ENCODE measurements at regions of chr14 and their contacts with region 1.

Region 1: DNA sequence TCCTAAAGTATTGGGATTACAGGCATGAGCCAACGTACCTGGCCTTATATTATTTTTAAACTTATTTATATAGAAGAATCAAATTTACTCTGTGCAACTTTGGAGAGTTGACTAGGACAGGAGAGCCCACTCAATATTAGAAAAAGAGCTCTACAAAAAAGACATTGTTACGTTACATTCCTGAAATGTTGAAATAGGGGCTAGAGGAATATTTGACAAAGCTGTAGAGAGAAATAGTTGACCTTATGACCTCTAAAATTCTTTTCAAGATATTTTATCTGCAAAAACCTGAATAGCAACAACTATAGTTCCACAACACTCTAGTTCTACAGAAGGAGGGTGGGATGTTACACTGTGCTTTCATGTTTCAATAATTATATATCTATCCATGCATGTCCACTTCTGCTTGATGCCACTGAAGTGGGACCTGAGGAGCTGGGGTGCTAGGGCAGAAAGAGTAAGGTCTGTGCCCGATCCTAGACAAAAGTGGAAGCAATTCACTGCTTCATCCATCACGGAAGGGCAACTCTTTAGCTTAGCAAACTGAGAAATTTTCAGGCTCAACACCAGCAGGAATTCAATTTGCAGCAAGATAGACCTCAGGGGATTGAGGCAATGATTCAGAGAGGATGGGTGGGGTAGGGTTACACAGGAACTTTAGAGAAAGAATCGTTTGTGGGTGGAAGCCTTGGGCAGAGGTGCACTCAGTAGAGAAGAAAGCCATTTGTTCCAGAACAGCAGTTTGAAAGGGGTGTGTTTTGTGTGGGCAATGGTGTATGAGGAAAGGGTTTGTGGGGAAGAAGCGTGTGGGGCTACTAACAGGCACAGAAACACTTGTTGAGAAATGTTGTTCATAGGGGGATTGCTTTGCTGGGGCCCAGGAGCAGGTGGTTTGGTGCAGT is 16.0 kb upstream of the RNASE10 start:
- DNase-seq: peak in 4 of 5 donors; percentile 15 to 38 (median 21)
- H3K4me3 ChIP-seq: peak overlapping the region in 1 of 2 donors; percentile 1
- H3K4me3 Mint-ChIP-seq: peak overlapping the region; percentile 60 to 87 (median 84)
- H3K27ac ChIP-seq: no peak overlapping the region
- H3K27ac Mint-ChIP-seq: peak overlapping the region; percentile 33 to 95 (median 86)
- H3K4me1 ChIP-seq: peaks cover 75% of the 10 kb centered on the region
- H3K4me1 Mint-ChIP-seq: peaks cover 59 to 88% (median 70%) of the 10 kb centered on the region in 4 donors
- H3K27me3 ChIP-seq: no peaks in the 10 kb centered on the region
- H3K27me3 Mint-ChIP-seq: no peaks in the 10 kb centered on the region

Region 2: DNA sequence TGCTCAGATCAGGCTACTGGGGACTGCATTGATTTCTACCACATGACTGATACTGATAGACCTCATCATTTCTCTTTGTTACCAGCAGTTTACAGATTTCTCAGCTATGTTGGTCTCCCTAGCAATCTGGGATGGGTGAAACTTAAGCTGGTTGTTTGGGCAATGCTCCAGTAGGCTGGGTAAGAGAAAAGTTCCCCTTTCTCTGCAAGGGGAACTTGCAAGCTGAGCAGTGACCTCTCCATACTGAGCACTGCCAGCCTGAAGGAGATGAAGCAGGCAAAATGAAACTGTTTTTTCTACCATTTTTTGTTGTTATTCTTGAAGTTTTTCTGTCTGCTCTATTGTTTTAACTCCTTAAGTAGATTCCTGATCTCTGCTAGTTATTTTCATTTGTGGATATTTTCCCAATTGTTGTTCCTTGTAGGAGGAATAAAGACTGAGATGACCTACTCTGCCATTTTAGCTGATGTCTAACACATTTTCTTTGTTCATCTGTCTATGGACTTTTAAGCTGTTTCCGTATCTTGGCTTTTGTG is 717.4 kb before region 1 on chr14:
- CTCF ChIA-PET with region 1: no interaction called
- POLR2A ChIA-PET with region 1: no interaction called
- intact Hi-C with region 1: no loop called
- DNase-seq: no peak
- H3K4me3 ChIP-seq: no peak overlapping the region
- H3K4me3 Mint-ChIP-seq: no peak overlapping the region
- H3K27ac ChIP-seq: no peak overlapping the region
- H3K27ac Mint-ChIP-seq: no peak overlapping the region
- H3K4me1 ChIP-seq: no peaks in the 10 kb centered on the region
- H3K4me1 Mint-ChIP-seq: no peaks in the 10 kb centered on the region
- H3K27me3 ChIP-seq: no peaks in the 10 kb centered on the region
- H3K27me3 Mint-ChIP-seq: no peaks in the 10 kb centered on the region

Region 3: GRCh38 chr14:20454516-20455354 is 34.6 kb before region 1 on chr14 and contains the starts of genes APEX1 and OSGEP:
- CTCF ChIA-PET with region 1: interaction called, 3 read pairs
- POLR2A ChIA-PET with region 1: interaction called, 19 read pairs
- intact Hi-C with region 1: no loop called
- DNase-seq: peak; percentile 96 to 99 (median 98)
- H3K4me3 ChIP-seq: peak within 1 kb of the TSS; percentile 70 to 99
- H3K4me3 Mint-ChIP-seq: peak within 1 kb of the TSS in 2 of 8 donors; percentile 13 to 23
- H3K27ac ChIP-seq: peak within 1 kb of the TSS; percentile 89
- H3K27ac Mint-ChIP-seq: peak within 1 kb of the TSS in 2 of 7 donors; percentile 19 to 55
- H3K4me1 ChIP-seq: peaks cover 53% of the 10 kb centered on the region
- H3K4me1 Mint-ChIP-seq: peaks cover 5 to 21% (median 12%) of the 10 kb centered on the region in 4 donors
- H3K27me3 ChIP-seq: no peaks in the 10 kb centered on the region
- H3K27me3 Mint-ChIP-seq: no peaks in the 10 kb centered on the region
- total RNA-seq, gene APEX1: 102 to 105 TPM
- total RNA-seq, gene OSGEP: 72.3 to 75.9 TPM

Region 4: GRCh38 chr14:20461274-20462001 is 27.9 kb before region 1 on chr14 and contains the start of gene PIP4P1:
- CTCF ChIA-PET with region 1: interaction called, 3 read pairs
- POLR2A ChIA-PET with region 1: interaction called, 19 read pairs
- intact Hi-C with region 1: no loop called
- DNase-seq: peak; percentile 98 to 100 (median 99)
- H3K4me3 ChIP-seq: peak within 1 kb of the TSS; percentile 64 to 76
- H3K4me3 Mint-ChIP-seq: peak within 1 kb of the TSS; percentile 89 to 96 (median 92)
- H3K27ac ChIP-seq: peak within 1 kb of the TSS; percentile 86
- H3K27ac Mint-ChIP-seq: peak within 1 kb of the TSS; percentile 92 to 99 (median 97)
- H3K4me1 ChIP-seq: peaks cover 39% of the 10 kb centered on the region
- H3K4me1 Mint-ChIP-seq: peaks cover 19 to 35% (median 23%) of the 10 kb centered on the region in 4 donors
- H3K27me3 ChIP-seq: no peaks in the 10 kb centered on the region
- H3K27me3 Mint-ChIP-seq: no peaks in the 10 kb centered on the region
- total RNA-seq, gene PIP4P1: 77.8 to 78.1 TPM

Region 5: GRCh38 chr14:20469242-20469889 is 20.0 kb before region 1 on chr14 and contains the start of gene PNP:
- CTCF ChIA-PET with region 1: interaction called, 14 read pairs
- POLR2A ChIA-PET with region 1: interaction called, 74 read pairs
- intact Hi-C with region 1: loop called (anchors 2 kb)
- DNase-seq: peak; percentile 84 to 92 (median 88)
- H3K4me3 ChIP-seq: peak within 1 kb of the TSS; percentile 84 to 92
- H3K4me3 Mint-ChIP-seq: peak within 1 kb of the TSS; percentile 97 to 100 (median 99)
- H3K27ac ChIP-seq: peak within 1 kb of the TSS; percentile 77
- H3K27ac Mint-ChIP-seq: peak within 1 kb of the TSS; percentile 94 to 99 (median 98)
- H3K4me1 ChIP-seq: peaks cover 47% of the 10 kb centered on the region
- H3K4me1 Mint-ChIP-seq: peaks cover 33 to 55% (median 43%) of the 10 kb centered on the region in 4 donors
- H3K27me3 ChIP-seq: no peaks in the 10 kb centered on the region
- H3K27me3 Mint-ChIP-seq: no peaks in the 10 kb centered on the region
- total RNA-seq, gene PNP: 106 to 108 TPM

Region 6: DNA sequence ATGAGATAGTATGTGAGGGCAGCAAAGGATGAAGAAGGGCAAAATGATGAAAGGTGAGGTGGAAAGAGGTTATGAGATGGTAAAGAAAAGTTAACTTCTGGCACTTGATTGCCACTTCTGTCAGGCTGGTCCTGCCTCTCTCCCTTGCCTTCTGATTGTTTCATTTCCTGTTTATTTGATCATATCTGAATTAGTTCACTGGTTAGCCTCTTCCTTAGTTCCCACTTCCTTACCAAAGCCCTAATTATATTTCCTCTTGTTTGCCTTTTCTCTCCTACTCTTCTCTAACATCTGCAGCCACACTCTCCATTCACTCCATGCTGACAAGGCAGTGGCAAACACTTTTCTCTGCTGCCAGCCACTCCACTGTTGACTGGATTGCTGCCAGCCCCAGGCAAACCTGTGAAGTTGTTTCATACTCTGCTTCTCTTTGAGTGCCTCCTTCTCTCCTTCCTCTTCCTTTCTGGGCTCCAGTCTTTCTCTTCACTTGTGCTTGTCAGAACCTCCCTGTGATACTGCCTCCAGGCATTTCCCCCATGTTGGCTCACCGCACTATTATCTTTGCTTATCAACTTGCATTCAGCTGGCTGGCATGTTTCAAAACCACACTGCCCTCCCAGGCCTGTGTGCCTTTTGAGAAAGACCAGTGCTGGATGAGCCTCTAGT is 12.0 kb before region 1 on chr14:
- CTCF ChIA-PET with region 1: interaction called, 7 read pairs
- POLR2A ChIA-PET with region 1: interaction called, 22 read pairs
- intact Hi-C with region 1: loop called (anchors 1 kb)
- DNase-seq: peak; percentile 55 to 67 (median 62)
- H3K4me3 ChIP-seq: peak overlapping the region in 1 of 2 donors; percentile 42
- H3K4me3 Mint-ChIP-seq: peak overlapping the region; percentile 66 to 87 (median 80)
- H3K27ac ChIP-seq: peak overlapping the region; percentile 51
- H3K27ac Mint-ChIP-seq: peak overlapping the region; percentile 84 to 97 (median 90)
- H3K4me1 ChIP-seq: peaks cover 98% of the 10 kb centered on the region
- H3K4me1 Mint-ChIP-seq: peaks cover 57 to 94% (median 76%) of the 10 kb centered on the region in 4 donors
- H3K27me3 ChIP-seq: no peaks in the 10 kb centered on the region
- H3K27me3 Mint-ChIP-seq: no peaks in the 10 kb centered on the region

Measured in CD4-positive, alpha-beta memory T cell (primary cell).